Activated T-helper 1 cell treated with anti-CD3 and anti-CD28 coated beads, Interleukin-12 subunit alpha, Interleukin-12 subunit beta, Interleukin-2, Interleukin-4 antibody, amounts not matched to agents 30 ng/mL and 10 ng/mL and 1 ng/mL, durations not matched to agents 14 hours and 24 hours and 36 hours (primary cell): ENCODE measurements at regions of chr9 and their contacts with region 1.

Region 1: GRCh38 chr9:19127881-19128500 is 699 bp upstream of the PLIN2 start:
- DNase-seq: peak; percentile 18
- H3K4me3 Mint-ChIP-seq: peak overlapping the region; percentile 92
- H3K27ac Mint-ChIP-seq: peak overlapping the region; percentile 89
- H3K4me1 Mint-ChIP-seq: peaks cover 53% of the 10 kb centered on the region
- H3K27me3 Mint-ChIP-seq: no peaks in the 10 kb centered on the region

Region 2: DNA sequence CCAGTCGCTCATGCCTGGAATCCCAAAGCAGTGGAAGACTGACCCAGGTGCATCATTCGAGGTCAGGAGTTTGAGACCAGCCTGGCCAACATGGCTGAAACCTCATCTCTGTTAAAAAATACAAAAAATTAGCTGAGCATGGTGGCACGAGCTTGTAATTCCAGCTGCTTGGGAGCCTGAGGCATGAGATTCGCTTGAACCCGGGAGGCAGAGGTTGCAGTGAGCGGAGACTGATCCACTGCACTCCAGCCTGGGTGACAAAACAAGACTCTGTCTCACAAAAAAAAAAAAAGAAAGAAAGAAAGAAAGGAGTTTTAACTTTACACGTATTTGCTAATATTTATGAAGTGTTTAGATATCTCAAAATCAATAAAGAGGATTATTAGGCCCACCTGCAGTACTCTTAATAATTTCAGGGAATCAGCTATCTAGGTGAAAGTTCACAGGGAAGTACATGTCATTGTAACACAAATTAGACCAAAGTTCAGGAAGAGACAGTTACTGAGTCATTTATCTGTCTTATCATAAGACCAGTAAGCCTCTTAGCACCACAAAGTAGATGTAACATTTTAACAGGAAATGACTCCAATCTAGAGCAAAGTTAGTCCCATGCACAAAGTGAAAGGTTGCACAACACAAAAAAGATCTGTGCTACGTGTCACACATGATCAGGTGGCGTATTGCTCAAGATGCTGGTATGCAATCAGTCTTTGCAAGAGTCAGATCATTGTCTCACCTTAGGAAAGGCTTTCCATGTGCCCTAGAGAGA is 33.5 kb after region 1 on chr9:
- intact Hi-C with region 1: loop called (anchors 1 kb)
- DNase-seq: peak; percentile 60
- H3K4me3 Mint-ChIP-seq: peak overlapping the region; percentile 48
- H3K27ac Mint-ChIP-seq: peak overlapping the region; percentile 95
- H3K4me1 Mint-ChIP-seq: peaks cover 19% of the 10 kb centered on the region
- H3K27me3 Mint-ChIP-seq: no peaks in the 10 kb centered on the region

Region 3: DNA sequence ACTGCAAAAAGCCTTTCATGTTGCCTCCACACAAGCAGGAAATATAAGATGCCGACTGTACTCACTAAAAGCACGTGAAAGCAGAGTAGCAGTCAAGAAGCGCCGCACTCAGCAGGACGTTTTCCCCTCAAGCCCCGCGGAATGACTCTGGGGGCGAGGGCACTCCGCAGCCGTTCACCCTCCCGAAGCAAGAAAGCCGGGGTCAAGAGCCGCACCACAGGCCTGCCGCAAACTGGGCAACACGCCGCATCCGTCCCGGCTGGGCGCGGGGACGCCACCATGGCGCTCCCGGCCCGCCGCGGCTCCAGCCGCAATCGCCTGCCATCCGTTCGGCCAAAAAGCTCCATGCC is 251.7 kb after region 1 on chr9:
- intact Hi-C with region 1: loop called (anchors 1 kb)
- DNase-seq: no peak
- H3K4me3 Mint-ChIP-seq: peak overlapping the region; percentile 98
- H3K27ac Mint-ChIP-seq: peak overlapping the region; percentile 98
- H3K4me1 Mint-ChIP-seq: peaks cover 61% of the 10 kb centered on the region
- H3K27me3 Mint-ChIP-seq: no peaks in the 10 kb centered on the region